GM10248 (cell line): ENCODE measurements at regions of chr5 and their contacts with region 1.

Region 1: GRCh38 chr5:138963763-138964371 is 88.7 kb upstream of the LRRTM2 start:
- DNase-seq: no peak
- CTCF ChIP-seq: no peak

Region 2: DNA sequence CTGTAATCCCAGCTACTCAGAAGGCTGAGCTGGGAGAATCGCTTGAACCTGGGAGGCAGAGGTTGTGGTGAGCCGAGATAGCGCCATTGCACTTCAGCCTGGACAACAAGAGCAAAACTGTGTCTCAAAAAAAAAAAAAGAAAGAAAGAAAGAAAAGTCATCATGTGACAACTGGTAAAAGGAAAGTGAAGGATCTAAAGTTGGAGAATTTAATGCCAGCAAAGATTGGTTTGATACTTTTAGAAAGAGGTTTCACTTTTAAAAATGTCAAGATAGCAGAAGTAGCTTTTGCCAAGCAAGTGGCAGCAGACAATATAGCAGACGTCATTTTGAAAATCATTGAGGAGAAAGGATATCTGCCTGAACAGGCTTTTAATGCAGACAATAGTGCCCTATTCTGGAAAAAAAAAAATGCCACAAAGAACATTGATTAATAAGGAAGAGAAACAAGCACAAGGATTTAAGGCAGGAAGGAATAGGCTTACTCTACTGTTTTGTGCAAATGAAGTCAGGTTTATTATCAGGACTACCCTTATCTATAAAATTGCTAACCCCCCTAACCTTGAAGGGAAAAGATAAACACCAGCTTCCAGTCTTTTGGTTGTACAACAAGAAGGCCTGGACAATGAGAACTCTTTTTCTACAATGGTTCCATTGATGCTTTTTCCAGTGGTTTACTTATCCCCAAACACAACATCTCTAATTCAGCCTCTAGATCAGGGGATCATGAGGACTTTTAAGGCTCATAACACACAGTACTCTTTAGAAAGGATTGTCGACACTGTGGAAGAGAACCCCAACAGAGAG is 1062.7 kb before region 1 on chr5:
- CTCF ChIA-PET with region 1: no interaction called
- POLR2A ChIA-PET with region 1: no interaction called
- DNase-seq: no peak
- CTCF ChIP-seq: no peak

Region 3: GRCh38 chr5:138975098-138975847 is 11.4 kb after region 1 on chr5:
- CTCF ChIA-PET with region 1: interaction called, 15 read pairs
- POLR2A ChIA-PET with region 1: interaction called, 4 read pairs
- DNase-seq: peak; percentile 38
- CTCF ChIP-seq: no peak

Region 4: DNA sequence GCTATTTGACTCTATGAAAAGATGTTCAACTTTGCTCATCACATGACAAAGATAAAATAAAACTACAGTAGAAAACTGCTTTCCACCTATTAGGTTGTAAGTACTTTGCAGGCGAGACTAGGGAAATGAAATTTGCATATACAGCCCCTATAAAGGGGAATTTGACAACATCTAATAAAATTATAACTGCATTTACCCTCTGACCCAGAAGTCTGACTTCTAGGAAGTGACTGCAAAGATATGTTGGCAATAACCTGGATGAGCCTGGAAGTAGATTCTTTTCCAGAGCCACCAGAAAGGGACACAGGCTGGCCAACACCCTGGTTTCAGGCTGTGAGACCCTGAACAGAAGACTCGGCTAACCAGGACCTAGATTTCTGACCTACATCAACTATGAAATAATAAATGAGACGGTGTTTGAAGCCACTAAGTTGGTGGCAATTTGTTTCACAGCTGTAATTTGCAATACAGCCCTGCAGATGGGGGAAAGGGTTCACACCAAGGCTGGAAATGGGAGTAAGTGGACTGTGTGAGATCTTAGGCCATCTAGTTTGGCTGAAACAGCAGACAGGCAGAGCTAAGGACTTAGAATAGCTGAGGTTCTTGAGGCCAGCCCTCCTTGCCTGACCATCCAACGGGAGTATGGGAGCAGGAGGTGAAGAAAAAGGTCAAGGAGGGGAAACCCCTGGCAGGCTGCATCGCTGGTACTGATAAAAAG is 127.7 kb after region 1 on chr5:
- CTCF ChIA-PET with region 1: no interaction called
- POLR2A ChIA-PET with region 1: no interaction called
- DNase-seq: no peak
- CTCF ChIP-seq: peak; percentile 32